ENCODE measurements at regions of chr10 and their contacts with region 1.

Region 1: DNA sequence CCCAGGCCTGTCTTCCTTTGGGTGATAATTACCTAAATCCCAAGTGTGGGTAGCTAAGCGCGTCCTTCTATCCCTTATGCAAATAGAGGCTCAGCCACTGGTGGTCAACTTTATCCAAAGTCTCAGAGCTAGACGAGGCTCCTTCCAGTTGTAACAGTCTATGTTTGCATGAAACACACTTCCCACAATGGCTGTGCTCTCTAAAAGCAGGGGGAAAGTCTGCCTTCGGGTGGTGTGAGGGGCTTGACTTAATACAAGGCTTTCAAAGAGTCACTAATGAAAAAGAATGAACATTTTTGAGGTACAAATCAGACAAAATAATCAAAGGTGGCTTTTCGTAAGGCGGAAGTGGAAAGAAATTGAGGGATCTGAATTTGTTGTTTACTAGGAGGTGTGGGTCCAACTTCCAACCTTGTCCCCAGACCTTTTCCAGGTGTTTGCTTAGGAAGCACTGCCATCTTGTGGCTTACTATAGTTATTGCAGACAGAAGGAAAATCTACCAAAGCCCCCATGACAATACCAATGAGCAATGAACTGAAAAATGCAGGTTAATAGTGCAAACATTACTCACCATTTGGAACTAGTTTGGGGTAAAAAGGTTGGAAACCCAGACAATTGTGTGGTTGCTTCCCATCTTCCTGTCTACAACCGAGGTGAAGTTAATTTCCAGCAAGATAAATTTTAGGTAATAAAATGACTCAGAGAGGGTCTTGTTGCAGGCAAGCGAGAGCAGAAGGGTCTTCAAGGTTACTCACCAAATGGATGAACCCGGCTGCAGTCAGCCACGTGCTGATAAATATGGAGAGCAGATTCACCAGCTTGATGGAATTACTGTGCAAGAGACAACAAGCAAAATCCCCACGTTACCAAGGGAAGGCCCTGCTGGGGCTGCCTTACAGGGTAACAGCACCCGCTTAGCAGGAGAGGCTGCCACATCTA is 525.7 kb downstream of the KCNMA1 start:
- DNase-seq: peak; percentile 99
- ATAC-seq: peak; percentile 78
- H3K4me3 ChIP-seq: peak overlapping the region; percentile 4; the same call in 1 of the 2 replicates
- H3K27ac ChIP-seq: peak overlapping the region; percentile 69
- H3K4me1 ChIP-seq: peaks cover 25% of the 10 kb centered on the region
- H3K27me3 ChIP-seq: no peaks in the 10 kb centered on the region
- CTCF ChIP-seq: peak; percentile 100

Region 2: DNA sequence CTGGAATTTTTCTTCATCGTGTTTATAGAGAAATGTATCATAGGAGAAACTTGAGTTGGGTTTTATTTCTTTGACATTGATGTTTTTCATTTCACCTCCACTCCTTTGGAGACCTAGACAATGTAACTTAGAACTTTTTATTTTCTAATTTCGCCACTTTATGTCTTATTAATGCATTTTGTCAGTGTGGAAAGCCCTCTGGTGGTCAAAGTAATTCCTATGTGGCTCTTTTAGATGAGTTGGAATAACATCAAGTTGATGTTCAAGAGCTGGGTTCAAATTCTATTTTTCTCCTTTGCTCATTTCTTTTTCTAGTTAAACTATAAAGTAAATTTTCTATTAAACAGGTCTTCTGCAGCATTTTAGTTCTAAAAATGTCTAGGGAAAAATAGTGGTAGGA is 1201.8 kb before region 1 on chr10:
- CTCF ChIA-PET with region 1: no interaction called
- POLR2A ChIA-PET with region 1: no interaction called
- intact Hi-C with region 1: loop called (anchors 5 kb)
- DNase-seq: peak; percentile 90
- ATAC-seq: peak; percentile 36; the same call in 1 of the 2 replicates
- H3K4me3 ChIP-seq: no peak overlapping the region
- H3K27ac ChIP-seq: no peak overlapping the region
- H3K4me1 ChIP-seq: peaks cover 7% of the 10 kb centered on the region
- H3K27me3 ChIP-seq: peaks cover 74% of the 10 kb centered on the region
- CTCF ChIP-seq: no peak

Region 3: GRCh38 chr10:76303682-76304316 is 808.1 kb before region 1 on chr10:
- CTCF ChIA-PET with region 1: no interaction called
- POLR2A ChIA-PET with region 1: no interaction called
- intact Hi-C with region 1: loop called (anchors 5 kb)
- DNase-seq: peak; percentile 98
- ATAC-seq: peak; percentile 98
- H3K4me3 ChIP-seq: no peak overlapping the region
- H3K27ac ChIP-seq: no peak overlapping the region
- H3K4me1 ChIP-seq: peaks cover 4% of the 10 kb centered on the region; the same call in 1 of the 2 replicates
- H3K27me3 ChIP-seq: peaks cover 13% of the 10 kb centered on the region; the same call in 1 of the 2 replicates
- CTCF ChIP-seq: peak; percentile 100

Region 4: GRCh38 chr10:76547352-76547972 is 564.4 kb before region 1 on chr10:
- CTCF ChIA-PET with region 1: no interaction called
- POLR2A ChIA-PET with region 1: no interaction called
- intact Hi-C with region 1: loop called (anchors 1 kb)
- DNase-seq: peak; percentile 100
- ATAC-seq: peak; percentile 85
- H3K4me3 ChIP-seq: peak overlapping the region; percentile 44
- H3K27ac ChIP-seq: no peak overlapping the region
- H3K4me1 ChIP-seq: peaks cover 5% of the 10 kb centered on the region
- H3K27me3 ChIP-seq: peaks cover 26% of the 10 kb centered on the region
- CTCF ChIP-seq: peak; percentile 100

Region 5: DNA sequence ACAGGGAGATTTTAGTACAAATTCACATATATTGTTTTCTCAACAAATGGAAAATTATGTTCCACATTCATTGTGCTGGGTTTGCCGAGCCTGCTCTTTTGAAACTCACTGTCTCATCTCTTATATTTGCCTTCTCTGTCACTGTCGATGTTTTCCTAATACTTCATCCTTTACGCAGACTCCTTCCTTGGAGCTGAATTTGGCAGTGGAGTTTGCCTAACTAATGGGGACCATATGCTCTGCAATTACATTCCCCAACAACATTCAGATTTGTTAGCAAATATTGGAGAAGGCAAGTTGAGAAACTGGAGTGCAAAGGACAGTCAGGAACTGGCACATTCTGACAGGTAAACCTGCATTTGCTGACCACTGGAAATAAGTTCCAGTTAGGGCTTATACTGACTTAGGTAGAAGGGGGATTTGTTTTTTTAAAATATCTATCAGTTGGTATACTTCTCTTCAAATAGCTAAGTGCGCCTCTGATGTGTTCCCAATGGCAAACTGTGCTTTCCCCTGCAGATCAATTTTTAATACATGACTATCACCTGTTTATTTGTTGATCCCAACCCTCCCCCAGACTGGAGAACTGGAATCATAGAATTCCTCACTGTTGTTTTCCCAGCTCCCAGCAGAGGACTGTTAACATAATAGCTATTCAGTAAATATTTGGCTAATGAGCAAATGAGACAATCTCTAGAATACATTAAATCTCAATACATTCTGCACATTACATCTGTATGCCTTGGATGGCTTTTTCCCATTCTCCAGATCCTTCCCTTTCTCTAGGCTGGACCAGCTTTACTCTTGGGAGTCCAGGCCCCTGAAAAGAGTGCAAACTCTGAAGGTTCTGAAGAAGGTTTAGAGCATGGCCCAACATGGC is 243.5 kb before region 1 on chr10:
- CTCF ChIA-PET with region 1: no interaction called
- POLR2A ChIA-PET with region 1: no interaction called
- intact Hi-C with region 1: loop called (anchors 10 kb)
- DNase-seq: peak; percentile 35
- ATAC-seq: peak; percentile 78
- H3K4me3 ChIP-seq: no peak overlapping the region
- H3K27ac ChIP-seq: no peak overlapping the region
- H3K4me1 ChIP-seq: no peaks in the 10 kb centered on the region
- H3K27me3 ChIP-seq: peaks cover 22% of the 10 kb centered on the region; the same call in 1 of the 2 replicates
- CTCF ChIP-seq: no peak

Region 6: DNA sequence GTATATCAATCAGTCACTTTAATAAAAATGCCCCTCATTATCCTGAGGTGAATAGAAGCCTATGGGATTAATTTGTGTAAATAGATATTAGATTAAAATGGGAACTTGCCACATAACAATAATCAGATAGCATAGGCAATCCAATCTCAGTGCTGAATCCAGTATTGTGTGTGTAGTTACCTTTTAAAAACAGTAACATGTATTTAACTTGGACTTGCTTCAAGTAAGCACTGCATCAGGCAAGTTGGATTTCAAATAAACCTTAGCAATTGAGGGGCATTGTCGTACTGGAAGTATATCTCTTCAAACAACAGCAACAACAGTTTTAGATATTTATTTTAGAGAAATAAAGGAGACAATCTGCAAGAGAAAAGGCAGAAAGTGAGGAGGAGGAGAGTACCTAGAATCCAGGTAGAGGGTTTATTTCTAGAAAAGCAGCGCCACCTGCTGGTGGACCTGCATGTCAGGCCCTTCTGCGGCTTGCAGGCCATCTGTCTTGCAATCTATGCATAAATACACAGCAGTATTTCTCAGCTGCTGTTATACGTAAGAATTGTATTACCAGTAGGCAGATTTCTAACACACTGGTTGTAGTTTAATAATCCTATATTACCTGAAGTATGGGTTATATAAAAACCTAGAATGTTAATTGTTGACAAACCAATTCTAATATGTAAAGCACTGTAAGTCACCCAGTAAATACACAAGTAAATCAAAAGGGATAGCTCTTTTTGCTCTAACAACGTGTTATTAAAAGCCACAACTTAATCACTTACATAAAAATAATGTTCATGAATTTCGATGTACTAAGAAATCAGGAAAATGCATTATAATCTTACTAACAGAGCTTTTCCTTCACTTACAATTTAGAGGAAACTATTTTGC is 127.1 kb before region 1 on chr10:
- CTCF ChIA-PET with region 1: no interaction called
- POLR2A ChIA-PET with region 1: no interaction called
- intact Hi-C with region 1: loop called (anchors 1 kb)
- DNase-seq: peak; percentile 100
- ATAC-seq: peak; percentile 95
- H3K4me3 ChIP-seq: no peak overlapping the region
- H3K27ac ChIP-seq: no peak overlapping the region
- H3K4me1 ChIP-seq: peaks cover 18% of the 10 kb centered on the region
- H3K27me3 ChIP-seq: no peaks in the 10 kb centered on the region
- CTCF ChIP-seq: peak; percentile 100

Region 7: DNA sequence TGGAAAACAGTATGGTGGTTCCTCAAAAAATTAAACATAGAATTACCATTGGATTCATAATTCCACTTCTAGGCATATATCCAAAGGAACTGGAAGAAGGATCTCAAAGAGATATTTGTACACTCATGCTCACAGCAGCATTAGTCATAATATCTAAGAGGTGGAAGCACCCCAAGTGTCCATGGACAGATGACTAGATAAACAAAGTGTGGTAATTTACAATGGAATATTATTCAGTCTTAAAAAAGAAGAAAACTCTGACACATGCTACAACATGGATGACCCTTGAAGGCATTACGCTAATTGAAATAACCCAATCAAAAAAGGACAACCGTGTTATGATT is 68.5 kb before region 1 on chr10:
- CTCF ChIA-PET with region 1: no interaction called
- POLR2A ChIA-PET with region 1: no interaction called
- intact Hi-C with region 1: loop called (anchors 1 kb)
- DNase-seq: peak; percentile 78
- ATAC-seq: peak; percentile 64
- H3K4me3 ChIP-seq: no peak overlapping the region
- H3K27ac ChIP-seq: peak overlapping the region; percentile 59
- H3K4me1 ChIP-seq: peaks cover 19% of the 10 kb centered on the region
- H3K27me3 ChIP-seq: no peaks in the 10 kb centered on the region
- CTCF ChIP-seq: no peak

Measured in PC-3 (cell line).